Activated B cell treated with CpG ODN at 0.5 μM for 24 hours (primary cell): ENCODE measurements at regions of chr9 and their contacts with region 1.

Region 1: DNA sequence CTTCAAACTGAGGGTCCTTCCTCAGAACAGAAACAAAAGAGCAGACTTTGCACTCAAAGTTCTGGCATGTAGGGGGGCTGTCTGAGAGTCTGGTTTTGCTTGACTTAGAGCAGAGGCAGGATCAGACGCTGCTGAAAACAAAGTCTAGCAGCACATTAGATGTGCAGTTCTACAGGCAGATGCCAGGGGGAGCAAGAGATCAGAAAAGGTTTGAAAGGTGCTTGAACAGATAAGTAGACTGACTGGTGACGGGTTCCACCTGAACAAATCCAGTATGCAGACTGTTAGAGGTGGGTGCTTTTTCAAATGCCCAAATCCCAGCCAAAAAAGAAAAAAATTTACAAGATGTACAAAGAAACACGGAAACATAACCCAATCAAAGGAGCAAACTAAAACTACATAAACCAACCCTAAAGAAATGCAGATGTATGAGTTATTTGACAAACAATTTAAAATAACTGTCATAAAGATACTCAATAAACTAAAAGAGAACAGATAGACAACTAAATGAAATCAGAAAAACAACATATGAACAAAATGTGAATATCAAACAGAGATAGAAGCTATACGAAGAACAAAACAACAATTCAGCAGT is 194.7 kb upstream of the FREM1 start:
- DNase-seq: no peak
- ATAC-seq: no peak
- H3K4me3 Mint-ChIP-seq: no peak overlapping the region
- H3K27ac Mint-ChIP-seq: no peak overlapping the region
- H3K4me1 Mint-ChIP-seq: no peaks in the 10 kb centered on the region
- H3K27me3 Mint-ChIP-seq: peaks cover 9% of the 10 kb centered on the region
- CTCF ChIP-seq: no peak

Region 2: GRCh38 chr9:15135164-15135792 is 30.4 kb after region 1 on chr9:
- CTCF ChIA-PET with region 1: interaction called, 5 read pairs
- POLR2A ChIA-PET with region 1: no interaction called
- intact Hi-C with region 1: loop called (anchors 1 kb)
- DNase-seq: no peak
- ATAC-seq: peak; percentile 65
- H3K4me3 Mint-ChIP-seq: no peak overlapping the region
- H3K27ac Mint-ChIP-seq: no peak overlapping the region
- H3K4me1 Mint-ChIP-seq: peaks cover 3% of the 10 kb centered on the region
- H3K27me3 Mint-ChIP-seq: peaks cover 4% of the 10 kb centered on the region
- CTCF ChIP-seq: no peak

Region 3: GRCh38 chr9:15142878-15143534 is 38.1 kb after region 1 on chr9:
- CTCF ChIA-PET with region 1: no interaction called
- POLR2A ChIA-PET with region 1: no interaction called
- intact Hi-C with region 1: loop called (anchors 2 kb)
- DNase-seq: no peak
- ATAC-seq: peak; percentile 37
- H3K4me3 Mint-ChIP-seq: no peak overlapping the region
- H3K27ac Mint-ChIP-seq: no peak overlapping the region
- H3K4me1 Mint-ChIP-seq: no peaks in the 10 kb centered on the region
- H3K27me3 Mint-ChIP-seq: peaks cover 2% of the 10 kb centered on the region
- CTCF ChIP-seq: no peak